ENCODE measurements at regions of chr7 and their contacts with region 1.

Region 1: DNA sequence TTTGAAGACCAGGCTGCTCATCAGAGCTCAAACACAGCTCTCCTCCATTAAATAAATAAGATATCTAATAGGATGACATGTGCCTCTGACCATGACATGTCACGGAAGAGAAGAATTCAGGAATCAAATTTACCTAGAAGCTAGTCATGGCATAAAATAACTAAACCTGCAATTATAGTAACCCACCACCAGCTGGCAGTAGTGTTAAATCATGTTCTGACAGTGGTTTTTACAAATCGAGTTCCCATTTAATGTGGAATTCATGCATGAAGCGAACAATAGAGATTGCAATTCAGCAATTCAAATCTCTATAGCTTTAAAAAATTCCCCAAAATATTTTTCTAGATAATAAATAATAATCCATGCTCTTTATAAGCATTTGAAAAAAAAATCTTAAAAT is 74.6 kb upstream of the IKZF1 start:
- DNase-seq: no peak
- ATAC-seq: no peak
- H3K4me3 ChIP-seq: no peak overlapping the region
- H3K27ac ChIP-seq: no peak overlapping the region
- H3K4me1 ChIP-seq: no peaks in the 10 kb centered on the region
- H3K27me3 ChIP-seq: no peaks in the 10 kb centered on the region
- CTCF ChIP-seq: peak; percentile 21 to 58 (median 46); a peak in 5 of 6 replicates
- EP300 ChIP-seq: no peak
- POLR2A ChIP-seq: no peak
- RAD21 ChIP-seq: peak; percentile 58

Region 2: DNA sequence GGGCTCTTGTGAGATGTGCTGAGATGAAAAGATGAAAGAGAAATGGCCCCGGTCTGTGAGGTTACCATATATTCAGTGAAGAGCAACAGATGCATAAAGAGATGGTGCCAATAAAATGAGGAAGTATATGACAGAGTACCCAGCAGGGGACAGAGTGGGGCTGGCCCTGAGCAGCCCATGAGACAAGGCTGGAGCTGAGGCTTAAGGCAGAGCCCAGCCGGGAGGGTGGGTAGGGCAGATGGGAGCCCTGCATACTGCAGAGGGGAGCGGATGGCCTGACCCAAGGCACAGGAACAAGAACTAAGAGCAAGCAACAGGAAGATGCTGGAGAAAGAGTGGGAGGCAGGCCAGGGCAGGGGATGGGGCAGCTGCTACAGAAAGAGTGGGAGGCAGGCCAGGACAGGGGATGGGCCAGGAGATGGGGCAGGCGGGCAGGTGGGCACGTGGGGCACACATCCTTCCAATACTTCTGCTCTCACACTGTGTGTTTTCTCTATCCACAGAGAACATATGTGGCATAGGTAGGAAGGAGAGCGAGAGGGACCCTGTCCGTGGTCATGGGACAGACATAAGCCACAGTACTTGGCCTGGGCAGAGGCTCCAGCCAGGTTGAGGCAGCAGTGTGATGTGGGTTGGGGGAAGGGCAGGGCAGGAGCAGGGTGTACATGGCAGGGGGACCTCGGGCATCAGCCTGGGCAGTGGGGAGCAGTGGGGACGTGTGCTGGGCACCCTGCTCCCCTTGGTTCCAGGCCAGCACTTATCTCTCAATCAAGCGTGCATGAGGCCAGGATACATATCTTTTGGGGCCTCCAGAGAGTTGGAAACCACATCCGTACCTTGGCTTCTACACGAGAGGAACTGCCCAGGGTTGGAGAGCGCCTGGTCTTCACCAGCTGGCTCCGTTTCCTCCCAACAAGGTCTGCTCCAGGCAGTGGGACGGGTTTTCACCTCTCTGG is 17.0 kb before region 1 on chr7:
- CTCF ChIA-PET with region 1: interaction called, 3 read pairs
- POLR2A ChIA-PET with region 1: no interaction called
- RAD21 ChIA-PET with region 1: interaction called, 3 read pairs
- SMC1A ChIA-PET with region 1: interaction called, 16 read pairs
- in situ Hi-C with region 1: no loop called
- intact Hi-C with region 1: no loop called
- DNase-seq: no peak
- ATAC-seq: peak; percentile 70
- H3K4me3 ChIP-seq: no peak overlapping the region
- H3K27ac ChIP-seq: no peak overlapping the region
- H3K4me1 ChIP-seq: peaks cover 9% of the 10 kb centered on the region
- H3K27me3 ChIP-seq: no peaks in the 10 kb centered on the region
- CTCF ChIP-seq: peak; percentile 20 to 47 (median 25); a peak in 3 of 6 replicates
- EP300 ChIP-seq: 0 out of 4 replicates have a peak, but pooled peaks of 1 of the 2 experiments have one; percentile 11
- POLR2A ChIP-seq: no peak
- RAD21 ChIP-seq: peak; percentile 61

Region 3: GRCh38 chr7:50389961-50390360 is 160.0 kb after region 1 on chr7:
- CTCF ChIA-PET with region 1: no interaction called
- POLR2A ChIA-PET with region 1: no interaction called
- RAD21 ChIA-PET with region 1: no interaction called
- SMC1A ChIA-PET with region 1: no interaction called
- in situ Hi-C with region 1: no loop called
- intact Hi-C with region 1: no loop called
- DNase-seq: no peak
- ATAC-seq: no peak
- H3K4me3 ChIP-seq: no peak overlapping the region
- H3K27ac ChIP-seq: no peak overlapping the region
- H3K4me1 ChIP-seq: peaks cover 9% of the 10 kb centered on the region
- H3K27me3 ChIP-seq: no peaks in the 10 kb centered on the region
- CTCF ChIP-seq: no peak
- EP300 ChIP-seq: no peak
- POLR2A ChIP-seq: no peak
- RAD21 ChIP-seq: no peak

Region 4: DNA sequence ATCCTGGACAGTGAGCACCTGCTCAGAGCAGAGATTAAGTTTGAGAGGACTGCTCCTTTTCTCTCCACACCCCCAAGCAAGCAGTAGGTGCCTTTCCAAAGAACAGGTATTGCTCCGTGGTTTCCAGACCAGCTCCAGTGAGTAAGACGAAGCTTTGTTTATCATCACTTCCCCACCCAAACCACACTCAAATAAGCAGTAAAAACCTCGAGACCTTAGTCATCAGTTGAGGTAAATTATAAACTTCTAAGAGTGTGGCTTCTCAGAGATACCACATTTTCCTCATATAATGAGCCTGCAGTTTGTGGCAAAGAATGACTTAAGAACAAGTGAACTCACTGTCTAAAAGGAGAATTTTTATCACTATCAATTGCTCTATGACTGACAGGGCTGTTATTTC is 602.8 kb after region 1 on chr7:
- CTCF ChIA-PET with region 1: no interaction called
- POLR2A ChIA-PET with region 1: no interaction called
- RAD21 ChIA-PET with region 1: no interaction called
- SMC1A ChIA-PET with region 1: no interaction called
- in situ Hi-C with region 1: no loop called
- intact Hi-C with region 1: no loop called
- DNase-seq: no peak
- ATAC-seq: no peak
- H3K4me3 ChIP-seq: no peak overlapping the region
- H3K27ac ChIP-seq: no peak overlapping the region
- H3K4me1 ChIP-seq: no peaks in the 10 kb centered on the region
- H3K27me3 ChIP-seq: no peaks in the 10 kb centered on the region
- CTCF ChIP-seq: no peak
- EP300 ChIP-seq: no peak
- POLR2A ChIP-seq: no peak
- RAD21 ChIP-seq: no peak